ENCODE measurements at regions of chr1 and their contacts with region 1.

Region 1: GRCh38 chr1:65075123-65075976 is 72.7 kb upstream of the AK4 start:
- DNase-seq: peak in 8 of 9 donors; percentile 43 to 81 (median 72)
- ATAC-seq: peak; percentile 97
- H3K4me3 ChIP-seq: no peak overlapping the region
- H3K4me3 Mint-ChIP-seq: peak overlapping the region in 1 of 10 donors; percentile 22
- H3K27ac ChIP-seq: no peak overlapping the region
- H3K27ac Mint-ChIP-seq: peak overlapping the region in 3 of 9 donors; percentile 26 to 76 (median 43)
- H3K4me1 ChIP-seq: peaks cover under 1 to 4% of the 10 kb centered on the region in 2 donors
- H3K4me1 Mint-ChIP-seq: peaks cover 6 to 34% (median 28%) of the 10 kb centered on the region in 7 donors
- H3K27me3 ChIP-seq: no peaks in the 10 kb centered on the region
- H3K27me3 Mint-ChIP-seq: peaks cover 0 to 9% (median 4%) of the 10 kb centered on the region in 5 donors

Region 2: DNA sequence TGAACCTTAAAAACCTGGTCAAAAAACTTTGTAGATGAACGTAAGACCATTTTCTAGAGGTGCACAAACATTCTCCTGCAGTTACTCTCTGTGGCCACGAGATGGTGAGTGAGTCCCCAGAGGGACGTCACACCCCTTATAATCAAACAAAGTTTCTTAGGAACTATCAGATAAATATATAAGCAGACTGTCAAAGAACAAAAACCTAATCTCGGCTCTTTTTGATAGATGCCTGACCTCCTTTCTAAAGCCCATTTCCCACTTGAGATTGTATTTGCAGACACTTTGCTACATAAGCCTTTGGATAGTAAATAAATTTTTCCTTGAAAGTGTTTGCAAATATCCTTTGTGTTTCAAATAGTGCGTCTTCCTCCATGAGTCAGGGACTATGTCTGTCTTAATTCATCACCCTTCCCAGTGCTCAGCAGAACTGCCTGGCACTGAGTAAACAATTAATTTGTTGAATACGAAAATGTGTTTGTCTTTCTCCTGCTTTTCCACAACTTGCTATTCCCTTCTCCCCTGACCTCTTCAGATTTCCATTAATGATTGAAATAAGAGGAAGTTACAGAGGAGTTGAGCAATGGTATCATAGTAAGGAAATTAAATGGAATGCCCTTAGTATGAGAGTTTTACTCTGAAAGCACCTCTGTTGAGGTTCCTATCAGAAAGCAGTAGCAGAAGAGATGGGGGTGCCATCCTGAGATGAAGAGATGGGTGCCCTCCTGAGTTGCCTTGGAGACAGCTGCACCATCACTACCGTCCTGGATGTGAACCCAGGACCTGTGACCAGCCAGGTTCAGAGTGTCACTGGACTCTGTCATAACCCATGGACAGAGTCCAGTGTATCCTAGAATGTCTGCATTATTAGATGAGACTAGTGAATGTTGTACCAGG is 388.3 kb before region 1 on chr1:
- CTCF ChIA-PET with region 1: no interaction called
- POLR2A ChIA-PET with region 1: no interaction called
- intact Hi-C with region 1: loop called (anchors 1 kb)
- DNase-seq: peak in 7 of 9 donors; percentile 9 to 45 (median 39)
- ATAC-seq: peak; percentile 75
- H3K4me3 ChIP-seq: no peak overlapping the region
- H3K4me3 Mint-ChIP-seq: no peak overlapping the region
- H3K27ac ChIP-seq: no peak overlapping the region
- H3K27ac Mint-ChIP-seq: no peak overlapping the region
- H3K4me1 ChIP-seq: no peaks in the 10 kb centered on the region
- H3K4me1 Mint-ChIP-seq: peaks cover 0 to 11% (median 0%) of the 10 kb centered on the region in 7 donors
- H3K27me3 ChIP-seq: no peaks in the 10 kb centered on the region
- H3K27me3 Mint-ChIP-seq: no peaks in the 10 kb centered on the region

Region 3: DNA sequence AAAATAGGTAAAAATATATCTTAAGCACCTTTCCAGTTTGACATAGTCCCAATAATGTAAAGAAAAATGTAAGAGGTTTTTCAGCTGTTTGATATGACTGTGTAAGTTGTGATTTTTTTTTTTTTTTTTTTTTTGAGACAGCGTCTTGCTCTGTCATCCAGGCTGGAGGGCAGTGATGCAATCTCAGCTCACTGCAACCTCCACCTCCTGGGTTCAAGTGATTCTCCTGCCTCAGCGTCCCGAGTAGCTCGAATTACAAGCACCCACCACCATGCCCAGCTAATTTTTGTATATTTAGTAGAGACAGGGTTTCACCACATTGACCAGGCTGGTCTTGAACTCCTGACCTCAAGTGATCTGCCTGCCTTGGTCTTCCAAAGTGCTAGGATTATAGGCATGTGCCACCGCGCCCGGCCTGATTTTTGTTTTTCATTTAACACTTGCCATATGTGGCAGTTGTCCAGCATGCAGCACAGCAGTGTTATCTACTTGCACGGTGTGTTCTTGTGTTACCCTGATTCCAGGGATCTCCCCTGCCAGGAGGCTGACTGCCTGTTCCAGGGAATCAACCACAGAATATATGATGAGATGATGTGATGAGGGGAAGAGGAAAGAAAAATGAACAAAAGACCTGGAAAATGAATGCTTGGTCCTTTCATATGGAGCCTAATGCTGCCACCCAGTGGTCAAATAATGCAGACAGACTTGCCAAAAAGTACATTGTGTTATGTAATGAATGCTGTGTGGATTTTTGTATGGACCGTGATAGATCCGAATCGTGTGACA is 251.5 kb before region 1 on chr1:
- CTCF ChIA-PET with region 1: interaction called, 3 read pairs
- POLR2A ChIA-PET with region 1: no interaction called
- intact Hi-C with region 1: loop called in 1 of 2 experiments (anchors 2 kb)
- DNase-seq: peak in 8 of 9 donors; percentile 38 to 74 (median 64)
- ATAC-seq: peak; percentile 80
- H3K4me3 ChIP-seq: no peak overlapping the region
- H3K4me3 Mint-ChIP-seq: peak overlapping the region in 3 of 10 donors; percentile 30 to 44 (median 44)
- H3K27ac ChIP-seq: no peak overlapping the region
- H3K27ac Mint-ChIP-seq: peak overlapping the region in 7 of 9 donors; percentile 5 to 77 (median 39)
- H3K4me1 ChIP-seq: peaks cover 5 to 17% of the 10 kb centered on the region in 2 donors
- H3K4me1 Mint-ChIP-seq: peaks cover 13 to 31% (median 26%) of the 10 kb centered on the region in 7 donors
- H3K27me3 ChIP-seq: no peaks in the 10 kb centered on the region
- H3K27me3 Mint-ChIP-seq: peaks cover 0 to 2% (median 0%) of the 10 kb centered on the region in 5 donors

Region 4: DNA sequence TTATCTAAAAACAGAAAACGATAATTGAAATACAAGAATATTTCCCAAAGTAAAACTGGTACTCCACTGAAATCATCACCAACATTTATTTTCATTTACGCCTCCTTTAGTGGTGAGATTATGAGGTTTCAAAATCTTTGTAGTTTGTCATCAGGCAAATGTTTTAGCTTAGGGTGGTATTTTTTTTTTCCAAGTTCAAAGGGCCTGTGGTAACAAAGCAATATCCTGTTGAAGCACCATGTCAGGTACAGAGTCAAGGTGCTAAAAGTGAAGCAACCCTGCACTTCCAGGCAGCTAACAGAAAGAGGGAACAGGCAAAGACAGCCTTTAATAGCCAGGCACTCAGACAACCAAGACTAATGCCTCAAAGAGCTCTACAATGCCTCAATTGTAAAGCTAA is 198.2 kb before region 1 on chr1:
- CTCF ChIA-PET with region 1: interaction called, 10 read pairs
- POLR2A ChIA-PET with region 1: interaction called, 3 read pairs
- intact Hi-C with region 1: loop called in 1 of 2 experiments (anchors 1 kb)
- DNase-seq: peak in 7 of 9 donors; percentile 75 to 90 (median 87)
- ATAC-seq: peak; percentile 96
- H3K4me3 ChIP-seq: peak overlapping the region; percentile 8
- H3K4me3 Mint-ChIP-seq: peak overlapping the region; percentile 70 to 83 (median 76)
- H3K27ac ChIP-seq: peak overlapping the region; percentile 36
- H3K27ac Mint-ChIP-seq: peak overlapping the region; percentile 41 to 95 (median 90)
- H3K4me1 ChIP-seq: peaks cover 43 to 53% of the 10 kb centered on the region in 2 donors
- H3K4me1 Mint-ChIP-seq: peaks cover 38 to 88% (median 84%) of the 10 kb centered on the region in 7 donors
- H3K27me3 ChIP-seq: no peaks in the 10 kb centered on the region
- H3K27me3 Mint-ChIP-seq: no peaks in the 10 kb centered on the region